ENCODE measurements at regions of chr17 and their contacts with region 1.

Region 1: DNA sequence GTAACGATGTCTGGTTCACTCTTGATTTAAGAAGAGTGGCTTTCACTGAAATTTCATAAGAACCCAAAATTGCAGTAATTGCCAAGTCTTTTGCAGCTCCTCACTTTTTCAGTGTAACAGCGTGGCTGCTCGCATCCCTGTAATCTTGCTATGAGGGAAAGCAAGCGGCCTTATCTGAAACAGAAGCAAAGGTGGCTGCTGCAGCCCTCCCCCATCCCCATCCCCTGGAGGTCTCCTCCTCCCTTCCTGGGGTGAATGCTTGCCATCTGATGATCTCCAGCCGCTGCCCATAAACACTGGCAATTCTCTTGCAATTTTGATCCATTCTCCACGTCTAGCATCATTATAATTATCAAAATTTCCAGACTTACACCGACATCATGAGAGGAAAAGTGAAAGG is 182.5 kb upstream of the ASIC2 start:
- DNase-seq: no peak
- ATAC-seq: no peak
- H3K4me3 ChIP-seq: no peak overlapping the region
- H3K27ac ChIP-seq: no peak overlapping the region
- H3K4me1 ChIP-seq: no peaks in the 10 kb centered on the region
- H3K27me3 ChIP-seq: no peaks in the 10 kb centered on the region
- CTCF ChIP-seq: no peak
- POLR2A ChIP-seq: no peak

Region 2: GRCh38 chr17:33366981-33367383 is 108.6 kb before region 1 on chr17:
- intact Hi-C with region 1: no loop called
- DNase-seq: no peak
- ATAC-seq: no peak
- H3K4me3 ChIP-seq: no peak overlapping the region
- H3K27ac ChIP-seq: no peak overlapping the region
- H3K4me1 ChIP-seq: peaks cover 6% of the 10 kb centered on the region
- H3K27me3 ChIP-seq: peaks cover 0 to 4% of the 10 kb centered on the region in 2 donors
- CTCF ChIP-seq: no peak
- POLR2A ChIP-seq: no peak

Region 3: GRCh38 chr17:33421933-33422332 is 53.7 kb before region 1 on chr17:
- intact Hi-C with region 1: loop called (anchors 5 kb)
- DNase-seq: no peak
- ATAC-seq: no peak
- H3K4me3 ChIP-seq: no peak overlapping the region
- H3K27ac ChIP-seq: no peak overlapping the region
- H3K4me1 ChIP-seq: no peaks in the 10 kb centered on the region
- H3K27me3 ChIP-seq: no peaks in the 10 kb centered on the region
- CTCF ChIP-seq: no peak
- POLR2A ChIP-seq: no peak

Region 4: DNA sequence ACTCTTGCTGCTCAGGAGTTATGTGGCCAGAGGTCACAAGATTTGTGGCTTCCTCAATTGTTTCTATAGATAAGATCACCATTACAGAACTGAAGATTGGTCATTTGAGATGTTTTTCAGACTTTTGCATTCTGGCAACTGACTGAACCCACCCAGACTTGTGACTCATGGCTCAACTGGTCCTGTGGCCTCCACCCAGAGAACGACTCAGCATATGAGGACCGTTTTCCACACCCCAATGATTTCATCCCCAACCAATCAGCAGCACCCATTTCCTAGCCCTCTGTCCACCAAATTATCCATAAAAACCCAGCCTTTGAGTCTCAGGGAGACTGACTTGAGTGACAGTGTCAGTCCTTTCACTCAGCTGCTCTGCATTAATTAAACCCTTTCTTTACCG is 39.3 kb before region 1 on chr17:
- intact Hi-C with region 1: no loop called
- DNase-seq: no peak
- ATAC-seq: no peak
- H3K4me3 ChIP-seq: no peak overlapping the region
- H3K27ac ChIP-seq: no peak overlapping the region
- H3K4me1 ChIP-seq: no peaks in the 10 kb centered on the region
- H3K27me3 ChIP-seq: no peaks in the 10 kb centered on the region
- CTCF ChIP-seq: no peak
- POLR2A ChIP-seq: no peak

Measured in body of pancreas (tissue), 4 donors.